CD8-positive, alpha-beta T cell (primary cell): ENCODE measurements at regions of chr14 and their contacts with region 1.

Region 1: DNA sequence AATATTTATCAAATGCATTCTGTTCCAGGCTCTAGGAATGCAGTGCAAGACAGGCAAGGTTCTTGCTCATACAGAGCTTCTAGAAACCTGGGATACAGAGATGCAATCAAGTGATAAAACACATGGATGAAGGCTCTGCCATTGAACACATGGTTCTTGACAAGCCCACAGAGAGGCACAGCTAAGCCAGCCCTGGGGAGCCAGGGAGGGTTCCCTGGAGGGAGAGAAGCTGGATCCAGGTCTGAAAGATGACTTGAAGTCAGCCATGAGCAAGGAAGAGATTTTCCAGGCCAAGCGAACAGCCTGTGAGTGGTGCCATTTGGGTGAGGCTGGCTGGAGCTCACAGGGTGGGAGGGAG is 66.2 kb downstream of the IRF2BPL start:
- DNase-seq: no peak
- ATAC-seq: peak; percentile 3
- H3K4me3 ChIP-seq: peak overlapping the region; percentile 44 to 59
- H3K4me3 Mint-ChIP-seq: peak overlapping the region; percentile 84
- H3K27ac ChIP-seq: peak overlapping the region; percentile 63 to 78
- H3K27ac Mint-ChIP-seq: peak overlapping the region; percentile 97
- H3K4me1 ChIP-seq: peaks cover 59% of the 10 kb centered on the region
- H3K4me1 Mint-ChIP-seq: peaks cover 73% of the 10 kb centered on the region
- H3K27me3 ChIP-seq: no peaks in the 10 kb centered on the region
- H3K27me3 Mint-ChIP-seq: no peaks in the 10 kb centered on the region
- CTCF ChIP-seq: no peak

Region 2: GRCh38 chr14:76918751-76919543 is 43.3 kb before region 1 on chr14:
- CTCF ChIA-PET with region 1: interaction called, 48 read pairs
- POLR2A ChIA-PET with region 1: interaction called, 3 read pairs
- intact Hi-C with region 1: no loop called
- DNase-seq: no peak
- ATAC-seq: no peak
- H3K4me3 ChIP-seq: no peak overlapping the region
- H3K4me3 Mint-ChIP-seq: no peak overlapping the region
- H3K27ac ChIP-seq: no peak overlapping the region
- H3K27ac Mint-ChIP-seq: no peak overlapping the region
- H3K4me1 ChIP-seq: peaks cover 17% of the 10 kb centered on the region
- H3K4me1 Mint-ChIP-seq: peaks cover 29% of the 10 kb centered on the region
- H3K27me3 ChIP-seq: no peaks in the 10 kb centered on the region
- H3K27me3 Mint-ChIP-seq: no peaks in the 10 kb centered on the region
- CTCF ChIP-seq: no peak

Region 3: GRCh38 chr14:76947078-76947837 is 15.0 kb before region 1 on chr14:
- CTCF ChIA-PET with region 1: interaction called, 10 read pairs
- POLR2A ChIA-PET with region 1: interaction called, 13 read pairs
- intact Hi-C with region 1: loop called in 1 of 2 experiments (anchors 1 kb)
- DNase-seq: peak; percentile 52 to 90 (median 80)
- ATAC-seq: peak; percentile 96
- H3K4me3 ChIP-seq: no peak overlapping the region
- H3K4me3 Mint-ChIP-seq: no peak overlapping the region
- H3K27ac ChIP-seq: peak overlapping the region in 1 of 2 experiments; percentile 19
- H3K27ac Mint-ChIP-seq: peak overlapping the region; percentile 60
- H3K4me1 ChIP-seq: peaks cover 13% of the 10 kb centered on the region
- H3K4me1 Mint-ChIP-seq: peaks cover 19% of the 10 kb centered on the region
- H3K27me3 ChIP-seq: no peaks in the 10 kb centered on the region
- H3K27me3 Mint-ChIP-seq: no peaks in the 10 kb centered on the region
- CTCF ChIP-seq: peak; percentile 46

Region 4: DNA sequence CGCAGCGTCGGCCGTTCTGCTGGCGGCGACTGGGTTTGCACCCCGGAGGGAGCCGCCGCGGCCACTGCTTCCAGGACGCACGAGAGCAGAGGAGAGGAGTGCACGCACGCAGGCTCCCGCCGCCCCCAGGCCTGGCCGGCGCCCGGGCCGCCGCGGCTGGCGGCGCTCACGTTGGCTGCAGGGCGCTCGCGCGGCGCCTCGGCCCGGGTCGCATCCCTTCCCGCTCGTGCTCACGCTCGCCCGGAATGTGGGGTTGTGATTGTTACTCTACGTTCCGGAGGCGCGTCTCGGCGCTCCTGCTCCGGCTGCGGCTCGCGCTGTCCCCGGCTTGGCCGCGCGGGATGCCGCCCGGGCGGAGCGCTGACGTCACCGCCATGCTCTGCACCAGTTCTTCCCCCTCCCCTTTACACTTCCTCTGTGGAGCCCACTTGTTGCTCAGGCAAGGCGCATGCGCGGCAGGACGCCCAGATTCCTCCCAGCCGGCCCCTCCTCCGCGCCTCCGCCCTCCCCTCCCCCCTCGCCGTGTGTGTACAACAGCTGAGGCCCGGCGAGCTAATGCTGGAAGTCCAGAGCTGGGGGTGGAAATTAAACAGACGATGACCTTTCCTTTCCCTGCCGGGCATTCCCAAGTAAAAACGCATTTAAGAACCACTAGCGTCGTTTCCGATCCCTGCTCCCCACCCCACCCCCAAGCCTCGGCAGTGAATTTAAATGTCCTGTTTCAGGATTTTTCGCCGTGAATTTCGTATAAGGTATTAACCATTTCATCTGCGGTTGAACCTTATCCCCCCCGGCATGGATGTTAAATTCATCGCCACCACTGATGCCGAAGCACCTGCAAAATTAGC is 66.3 kb after region 1 on chr14 and contains the start of gene IRF2BPL:
- CTCF ChIA-PET with region 1: interaction called, 16 read pairs
- POLR2A ChIA-PET with region 1: interaction called, 62 read pairs
- intact Hi-C with region 1: loop called (anchors 1 kb)
- DNase-seq: peak; percentile 86 to 98 (median 94)
- ATAC-seq: peak; percentile 68
- H3K4me3 ChIP-seq: peak within 1 kb of the TSS; percentile 66 to 94
- H3K4me3 Mint-ChIP-seq: peak within 1 kb of the TSS; percentile 93
- H3K27ac ChIP-seq: peak within 1 kb of the TSS; percentile 90 to 94
- H3K27ac Mint-ChIP-seq: peak within 1 kb of the TSS; percentile 96
- H3K4me1 ChIP-seq: peaks cover 69% of the 10 kb centered on the region
- H3K4me1 Mint-ChIP-seq: peaks cover 60% of the 10 kb centered on the region
- H3K27me3 ChIP-seq: no peaks in the 10 kb centered on the region
- H3K27me3 Mint-ChIP-seq: no peaks in the 10 kb centered on the region
- CTCF ChIP-seq: peak; percentile 2
- total RNA-seq, gene IRF2BPL: 53.7 to 53.9 TPM

Region 5: GRCh38 chr14:77067632-77068514 is 105.6 kb after region 1 on chr14:
- CTCF ChIA-PET with region 1: interaction called, 14 read pairs
- POLR2A ChIA-PET with region 1: no interaction called
- intact Hi-C with region 1: no loop called
- DNase-seq: peak; percentile 18 to 68 (median 55)
- ATAC-seq: peak; percentile 59
- H3K4me3 ChIP-seq: no peak overlapping the region
- H3K4me3 Mint-ChIP-seq: no peak overlapping the region
- H3K27ac ChIP-seq: no peak overlapping the region
- H3K27ac Mint-ChIP-seq: no peak overlapping the region
- H3K4me1 ChIP-seq: no peaks in the 10 kb centered on the region
- H3K4me1 Mint-ChIP-seq: peaks cover 2% of the 10 kb centered on the region
- H3K27me3 ChIP-seq: no peaks in the 10 kb centered on the region
- H3K27me3 Mint-ChIP-seq: peaks cover 5% of the 10 kb centered on the region
- CTCF ChIP-seq: peak; percentile 65

Region 6: GRCh38 chr14:78356391-78356790 is 1394.1 kb after region 1 on chr14:
- CTCF ChIA-PET with region 1: no interaction called
- POLR2A ChIA-PET with region 1: no interaction called
- intact Hi-C with region 1: no loop called
- DNase-seq: no peak
- ATAC-seq: no peak
- H3K4me3 ChIP-seq: no peak overlapping the region
- H3K4me3 Mint-ChIP-seq: no peak overlapping the region
- H3K27ac ChIP-seq: no peak overlapping the region
- H3K27ac Mint-ChIP-seq: no peak overlapping the region
- H3K4me1 ChIP-seq: no peaks in the 10 kb centered on the region
- H3K4me1 Mint-ChIP-seq: no peaks in the 10 kb centered on the region
- H3K27me3 ChIP-seq: no peaks in the 10 kb centered on the region
- H3K27me3 Mint-ChIP-seq: peaks cover 2% of the 10 kb centered on the region
- CTCF ChIP-seq: no peak

Region 7: DNA sequence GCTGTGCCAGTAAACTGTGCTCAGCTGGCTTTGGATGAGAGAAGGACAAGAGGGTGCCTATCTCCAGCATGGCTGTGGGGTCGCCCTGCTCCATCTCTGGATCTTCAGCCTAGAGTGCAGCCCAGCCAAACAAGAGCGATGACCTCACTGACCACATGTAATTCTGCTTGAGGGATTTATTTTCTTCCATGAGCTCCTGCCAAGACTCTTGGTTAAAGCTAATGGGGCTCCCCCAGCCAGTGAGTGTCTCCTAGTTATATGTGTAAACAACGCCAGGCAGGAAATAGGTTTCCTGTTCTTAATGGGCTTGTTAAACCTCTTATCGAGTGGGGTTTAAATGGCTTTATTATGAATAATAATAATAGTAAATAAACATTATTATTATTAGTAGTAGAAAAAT is 1605.1 kb after region 1 on chr14:
- CTCF ChIA-PET with region 1: no interaction called
- POLR2A ChIA-PET with region 1: no interaction called
- intact Hi-C with region 1: no loop called
- DNase-seq: no peak
- ATAC-seq: no peak
- H3K4me3 ChIP-seq: no peak overlapping the region
- H3K4me3 Mint-ChIP-seq: no peak overlapping the region
- H3K27ac ChIP-seq: no peak overlapping the region
- H3K27ac Mint-ChIP-seq: no peak overlapping the region
- H3K4me1 ChIP-seq: no peaks in the 10 kb centered on the region
- H3K4me1 Mint-ChIP-seq: peaks cover 3% of the 10 kb centered on the region
- H3K27me3 ChIP-seq: no peaks in the 10 kb centered on the region
- H3K27me3 Mint-ChIP-seq: no peaks in the 10 kb centered on the region
- CTCF ChIP-seq: no peak